ENCODE measurements at regions of chr7 and their contacts with region 1.

Region 1: DNA sequence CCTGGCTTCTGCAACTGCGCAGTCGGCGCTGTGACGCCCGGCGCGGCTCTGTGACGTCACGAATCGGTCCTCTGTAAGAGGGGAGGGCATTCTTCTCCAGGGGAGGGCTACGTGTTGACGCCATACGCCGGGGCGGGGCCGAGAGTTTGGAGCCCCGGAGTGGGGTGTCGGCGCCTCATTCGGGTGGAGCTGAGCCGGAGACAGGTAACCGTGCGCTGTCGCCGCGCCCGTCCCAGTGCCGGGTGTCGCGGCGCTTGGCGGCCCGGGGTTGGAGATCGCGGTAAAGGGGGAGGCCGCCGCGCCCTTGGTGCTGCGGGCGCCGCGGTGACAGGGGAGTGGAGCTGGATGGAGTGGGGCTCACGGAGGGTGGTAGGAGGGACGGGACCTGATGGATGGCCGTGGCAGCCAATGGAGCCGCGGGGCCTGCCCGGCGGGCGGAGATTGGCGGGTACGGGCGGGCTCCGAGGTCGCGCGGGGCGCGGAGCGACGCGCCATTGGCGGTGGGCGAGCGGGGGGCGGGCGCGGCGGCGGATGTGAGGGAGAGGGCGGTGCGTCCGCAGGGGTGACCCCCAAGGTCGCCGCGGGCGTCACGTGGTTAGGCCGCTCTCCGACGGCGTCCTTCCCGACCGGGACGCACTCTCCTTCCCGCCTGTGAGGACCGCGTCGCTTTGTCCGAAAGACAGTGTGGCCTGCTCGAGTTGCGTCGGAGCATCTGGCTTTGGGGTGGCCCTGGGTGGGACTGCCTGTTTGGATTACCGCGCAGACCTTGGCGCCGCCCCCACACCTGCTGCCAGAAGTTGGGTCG is at the start of gene OGDH:
- DNase-seq: peak; percentile 98 to 100
- ATAC-seq: peak; percentile 95 to 98 (median 96)
- H3K4me3 ChIP-seq: peak within 1 kb of the TSS; percentile 76
- H3K27ac ChIP-seq: peak within 1 kb of the TSS; percentile 96
- H3K4me1 ChIP-seq: peaks cover 23% of the 10 kb centered on the region
- H3K27me3 ChIP-seq: no peaks in the 10 kb centered on the region
- CTCF ChIP-seq: no peak
- total RNA-seq, gene OGDH: 252 to 500 (median 326) TPM

Region 2: GRCh38 chr7:43888993-43889945 is 717.4 kb before region 1 on chr7:
- intact Hi-C with region 1: no loop called
- DNase-seq: no peak
- ATAC-seq: peak in 2 of 4 donors; percentile 39 to 41
- H3K4me3 ChIP-seq: no peak overlapping the region
- H3K27ac ChIP-seq: no peak overlapping the region
- H3K4me1 ChIP-seq: peaks cover 14% of the 10 kb centered on the region
- H3K27me3 ChIP-seq: no peaks in the 10 kb centered on the region
- CTCF ChIP-seq: no peak

Region 3: GRCh38 chr7:44490351-44491200 is 116.1 kb before region 1 on chr7 and contains the start of gene NUDCD3:
- intact Hi-C with region 1: no loop called
- DNase-seq: peak; percentile 85 to 93
- ATAC-seq: peak; percentile 94 to 98 (median 96)
- H3K4me3 ChIP-seq: peak within 1 kb of the TSS; percentile 88
- H3K27ac ChIP-seq: peak within 1 kb of the TSS; percentile 97
- H3K4me1 ChIP-seq: peaks cover 35% of the 10 kb centered on the region
- H3K27me3 ChIP-seq: no peaks in the 10 kb centered on the region
- CTCF ChIP-seq: no peak
- total RNA-seq, gene NUDCD3: 97.7 to 140 (median 122) TPM

Region 4: GRCh38 chr7:44650772-44651171 is 44.1 kb after region 1 on chr7:
- intact Hi-C with region 1: loop called (anchors 5 kb)
- DNase-seq: peak in 1 of 2 donors; percentile 27
- ATAC-seq: peak; percentile 73 to 84 (median 79)
- H3K4me3 ChIP-seq: no peak overlapping the region
- H3K27ac ChIP-seq: peak overlapping the region; percentile 72
- H3K4me1 ChIP-seq: peaks cover 35% of the 10 kb centered on the region
- H3K27me3 ChIP-seq: no peaks in the 10 kb centered on the region
- CTCF ChIP-seq: no peak

Region 5: DNA sequence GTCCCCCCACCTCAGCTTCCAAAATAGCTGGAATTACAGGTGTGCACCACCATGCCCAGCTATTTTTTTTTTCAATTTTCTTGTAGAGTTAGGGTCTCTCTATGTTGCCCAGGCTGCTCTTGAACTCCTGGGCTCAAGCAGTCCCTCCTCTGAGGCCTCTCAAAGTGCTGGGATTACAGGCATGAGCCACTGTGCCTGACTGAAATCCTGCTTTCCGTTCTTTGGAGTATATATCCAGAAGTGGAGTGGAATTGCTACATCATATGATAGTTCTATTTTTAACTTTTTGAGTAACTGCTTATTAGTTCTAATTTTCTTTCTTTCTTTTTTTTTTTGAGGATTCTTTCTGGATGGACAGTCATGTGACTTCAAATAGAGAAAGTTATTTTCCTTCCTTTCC is 79.1 kb after region 1 on chr7:
- intact Hi-C with region 1: loop called in 1 of 2 experiments (anchors 10 kb)
- DNase-seq: no peak
- ATAC-seq: peak in 2 of 4 donors; percentile 21 to 33
- H3K4me3 ChIP-seq: no peak overlapping the region
- H3K27ac ChIP-seq: peak overlapping the region; percentile 67
- H3K4me1 ChIP-seq: peaks cover 8% of the 10 kb centered on the region
- H3K27me3 ChIP-seq: no peaks in the 10 kb centered on the region
- CTCF ChIP-seq: no peak

Region 6: DNA sequence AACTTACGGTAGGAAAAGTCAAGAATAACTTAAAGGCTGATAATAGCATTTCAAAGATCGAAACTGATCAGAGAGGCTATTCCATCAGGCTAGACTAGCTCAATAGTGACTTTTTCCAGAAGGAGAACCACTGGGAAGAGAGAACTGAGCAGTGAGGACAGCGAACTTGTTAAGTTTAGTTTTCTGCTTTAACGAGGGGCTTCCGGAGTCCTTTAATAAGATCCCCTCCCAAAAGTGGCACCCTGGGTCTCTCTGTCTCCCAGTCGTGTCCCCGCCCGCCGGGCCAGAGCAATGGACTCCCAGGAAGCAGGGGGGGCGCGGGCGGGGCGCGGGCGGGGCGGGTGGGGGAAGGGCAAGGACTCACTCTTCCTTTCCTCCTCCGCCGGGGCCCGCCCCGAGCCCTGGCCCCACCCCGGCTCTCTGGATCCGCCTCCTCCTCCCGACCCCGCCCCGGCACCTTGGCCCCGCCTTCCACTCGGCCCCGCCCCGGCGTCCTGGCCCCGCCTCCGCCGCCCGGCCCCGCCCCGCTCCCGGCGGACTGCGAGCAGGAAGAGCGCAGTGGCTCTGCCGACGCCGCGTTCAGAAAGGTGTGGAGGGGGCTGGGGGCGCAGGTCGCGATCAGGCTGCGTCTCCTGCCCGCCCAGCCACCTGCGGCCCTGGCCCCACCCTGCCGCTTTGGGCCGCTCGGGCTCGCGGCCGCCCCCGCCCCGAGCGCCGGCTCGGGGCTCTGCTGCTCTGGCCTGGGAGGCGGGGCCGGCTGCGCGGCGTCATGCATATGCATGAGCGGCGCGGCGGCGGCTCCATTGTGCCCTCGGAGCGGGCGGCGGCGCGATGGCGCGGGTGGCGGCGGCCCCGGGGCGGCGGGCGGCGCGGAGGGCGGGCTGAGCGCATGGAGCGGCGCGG is 141.6 kb after region 1 on chr7 and contains the start of gene ZMIZ2:
- intact Hi-C with region 1: loop called in 1 of 2 experiments (anchors 5 kb)
- DNase-seq: peak; percentile 93 to 97
- ATAC-seq: peak; percentile 98 to 99 (median 98)
- H3K4me3 ChIP-seq: peak within 1 kb of the TSS; percentile 91
- H3K27ac ChIP-seq: peak within 1 kb of the TSS; percentile 99
- H3K4me1 ChIP-seq: peaks cover 15% of the 10 kb centered on the region
- H3K27me3 ChIP-seq: no peaks in the 10 kb centered on the region
- CTCF ChIP-seq: no peak
- total RNA-seq, gene ZMIZ2: 25.0 to 32.9 (median 28.6) TPM

Region 7: GRCh38 chr7:44797329-44798251 is 190.9 kb after region 1 on chr7:
- intact Hi-C with region 1: loop called in 1 of 2 experiments (anchors 5 kb)
- DNase-seq: peak; percentile 89 to 92
- ATAC-seq: peak; percentile 79 to 82 (median 82)
- H3K4me3 ChIP-seq: peak overlapping the region; percentile 70
- H3K27ac ChIP-seq: peak overlapping the region; percentile 89
- H3K4me1 ChIP-seq: peaks cover 11% of the 10 kb centered on the region
- H3K27me3 ChIP-seq: no peaks in the 10 kb centered on the region
- CTCF ChIP-seq: peak; percentile 20